ENCODE measurements at regions of chr21 and their contacts with region 1.

Region 1: GRCh38 chr21:46559291-46559983 is 45.4 kb downstream of the S100B start:
- DNase-seq: peak; percentile 46 to 84 (median 72)
- ATAC-seq: peak; percentile 66 to 75
- H3K4me3 Mint-ChIP-seq: peak overlapping the region; percentile 71 to 89 (median 81)
- H3K27ac Mint-ChIP-seq: peak overlapping the region; percentile 96 to 99 (median 99)
- H3K4me1 Mint-ChIP-seq: peaks cover 42 to 96% (median 84%) of the 10 kb centered on the region in 4 donors
- H3K27me3 Mint-ChIP-seq: no peaks in the 10 kb centered on the region

Region 2: GRCh38 chr21:46424039-46424591 is 135.3 kb before region 1 on chr21:
- POLR2A ChIA-PET with region 1: interaction called, 15 read pairs
- DNase-seq: peak in 8 of 10 donors; percentile 25 to 74 (median 50)
- ATAC-seq: peak; percentile 27 to 54
- H3K4me3 Mint-ChIP-seq: peak overlapping the region; percentile 72 to 92 (median 88)
- H3K27ac Mint-ChIP-seq: peak overlapping the region; percentile 94 to 100 (median 99)
- H3K4me1 Mint-ChIP-seq: peaks cover 13 to 46% (median 43%) of the 10 kb centered on the region in 4 donors
- H3K27me3 Mint-ChIP-seq: no peaks in the 10 kb centered on the region

Region 3: DNA sequence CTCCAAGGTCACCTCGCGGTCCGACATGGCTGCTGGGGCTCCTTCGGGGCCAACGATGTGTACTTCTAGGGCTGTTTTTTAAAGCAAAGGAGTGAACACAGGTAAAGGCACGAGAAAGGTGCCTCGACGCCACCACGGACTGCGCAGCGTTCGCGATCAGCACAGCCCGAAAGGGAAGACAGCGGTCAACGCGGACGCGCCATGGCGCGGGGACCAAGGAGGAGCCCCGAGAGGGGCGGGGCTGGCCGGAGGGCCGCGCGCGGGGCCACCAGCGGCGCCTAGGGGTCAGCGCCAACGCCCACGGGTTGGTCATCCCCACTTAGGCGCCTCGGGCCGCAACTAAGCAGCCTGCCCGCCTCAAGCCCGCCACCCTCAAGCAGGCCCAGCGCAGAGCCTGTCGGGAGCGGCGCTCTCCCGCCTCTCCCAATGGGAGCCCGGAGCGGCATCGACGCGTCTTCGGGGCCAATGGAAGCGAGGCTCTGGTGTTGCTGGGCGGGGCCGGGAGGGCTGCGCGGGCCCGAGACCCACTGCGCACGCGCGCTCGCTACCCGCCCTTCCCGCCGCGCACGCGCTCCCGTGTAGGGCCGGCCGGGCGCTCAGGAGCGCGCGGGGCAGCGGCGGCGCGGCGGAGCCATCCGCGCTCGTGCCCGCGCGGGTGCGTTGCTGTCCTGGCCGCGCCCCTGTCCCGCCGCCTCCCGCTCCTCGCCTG is 101.0 kb before region 1 on chr21 and contains the start of gene DIP2A:
- POLR2A ChIA-PET with region 1: interaction called, 10 read pairs
- DNase-seq: peak; percentile 85 to 98 (median 94)
- ATAC-seq: peak; percentile 96 to 97
- H3K4me3 Mint-ChIP-seq: peak within 1 kb of the TSS; percentile 89 to 97 (median 92)
- H3K27ac Mint-ChIP-seq: peak within 1 kb of the TSS; percentile 78 to 98 (median 96)
- H3K4me1 Mint-ChIP-seq: peaks cover 21 to 67% (median 58%) of the 10 kb centered on the region in 4 donors
- H3K27me3 Mint-ChIP-seq: no peaks in the 10 kb centered on the region
- polyA plus RNA-seq, gene DIP2A: 26.8 to 33.6 (median 28.6) TPM

Region 4: DNA sequence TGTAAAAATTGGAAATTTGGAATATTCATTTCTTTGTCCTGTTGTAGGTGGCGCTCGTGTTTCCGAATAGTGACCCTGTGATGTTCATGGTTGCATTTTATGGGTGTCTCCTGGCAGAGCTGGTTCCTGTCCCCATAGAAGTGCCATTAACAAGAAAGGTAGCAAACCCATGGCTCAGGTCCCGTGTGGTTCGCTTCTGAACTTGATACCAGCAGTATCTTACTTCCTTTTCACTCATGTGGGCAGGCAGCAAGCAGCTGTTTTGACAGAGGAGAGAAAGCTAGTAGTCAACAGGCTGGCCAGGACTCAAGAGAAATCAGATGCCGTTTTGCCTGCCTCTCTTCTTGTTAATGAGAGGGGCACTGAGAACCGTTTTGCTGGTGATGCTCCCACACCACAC is 27.4 kb before region 1 on chr21:
- POLR2A ChIA-PET with region 1: interaction called, 71 read pairs
- DNase-seq: peak in 9 of 10 donors; percentile 23 to 81 (median 64)
- ATAC-seq: peak; percentile 98
- H3K4me3 Mint-ChIP-seq: peak overlapping the region in 9 of 10 donors; percentile 53 to 83 (median 66)
- H3K27ac Mint-ChIP-seq: peak overlapping the region; percentile 82 to 96 (median 92)
- H3K4me1 Mint-ChIP-seq: peaks cover 22 to 81% (median 69%) of the 10 kb centered on the region in 4 donors
- H3K27me3 Mint-ChIP-seq: no peaks in the 10 kb centered on the region

Region 5: DNA sequence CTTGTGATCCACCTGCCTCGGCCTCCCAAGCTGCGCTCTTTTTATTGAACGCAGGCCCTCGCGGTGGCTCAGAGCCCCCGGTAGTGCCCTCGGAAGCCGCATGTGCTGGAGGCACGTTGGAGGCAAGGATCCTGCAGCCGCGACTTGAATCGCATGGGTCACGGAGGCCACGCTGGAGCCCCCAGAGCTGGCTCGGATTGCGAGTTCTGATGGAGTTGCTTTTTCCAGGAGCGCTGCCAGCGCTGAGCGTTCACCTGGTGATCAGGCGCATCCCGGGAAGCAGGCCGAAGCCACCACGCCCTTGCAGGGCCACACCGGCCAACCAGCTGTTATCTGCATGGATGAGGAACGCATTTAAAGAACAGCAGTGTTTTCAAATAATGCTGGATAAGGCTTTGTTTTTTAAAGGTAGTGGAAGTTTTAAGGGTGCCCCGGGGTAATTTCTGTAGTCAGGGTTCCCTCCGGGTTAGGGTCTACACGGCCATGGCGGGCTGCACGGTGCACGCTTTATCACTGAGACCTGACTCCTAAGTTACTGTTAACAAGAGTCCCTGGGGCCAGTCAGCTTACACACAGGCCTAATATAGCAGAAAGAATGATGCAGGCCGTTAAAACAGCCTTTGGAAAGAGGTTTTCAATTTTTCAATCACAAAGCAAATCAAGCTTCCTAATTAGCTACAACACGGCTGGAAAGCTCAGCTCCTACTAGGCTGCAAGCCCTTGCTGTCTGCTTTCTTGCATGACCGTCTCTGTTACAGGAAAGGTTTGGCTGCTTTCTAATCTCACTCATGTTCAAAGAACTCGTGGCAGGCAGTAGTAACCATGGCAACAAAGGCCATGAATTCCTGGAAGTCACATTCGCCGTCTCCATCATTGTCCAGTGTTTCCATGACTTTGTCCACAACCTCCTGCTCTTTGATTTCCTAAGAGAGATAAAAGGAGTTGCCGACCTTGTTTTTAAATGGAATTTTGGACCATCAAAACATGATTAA is 39.4 kb after region 1 on chr21:
- POLR2A ChIA-PET with region 1: interaction called, 46 read pairs
- DNase-seq: peak in 1 of 10 donors; percentile 33
- ATAC-seq: peak; percentile 61 to 62
- H3K4me3 Mint-ChIP-seq: peak overlapping the region in 6 of 10 donors; percentile 1 to 42 (median 36)
- H3K27ac Mint-ChIP-seq: peak overlapping the region; percentile 12 to 92 (median 75)
- H3K4me1 Mint-ChIP-seq: peaks cover 19 to 47% (median 33%) of the 10 kb centered on the region in 4 donors
- H3K27me3 Mint-ChIP-seq: no peaks in the 10 kb centered on the region

Region 6: DNA sequence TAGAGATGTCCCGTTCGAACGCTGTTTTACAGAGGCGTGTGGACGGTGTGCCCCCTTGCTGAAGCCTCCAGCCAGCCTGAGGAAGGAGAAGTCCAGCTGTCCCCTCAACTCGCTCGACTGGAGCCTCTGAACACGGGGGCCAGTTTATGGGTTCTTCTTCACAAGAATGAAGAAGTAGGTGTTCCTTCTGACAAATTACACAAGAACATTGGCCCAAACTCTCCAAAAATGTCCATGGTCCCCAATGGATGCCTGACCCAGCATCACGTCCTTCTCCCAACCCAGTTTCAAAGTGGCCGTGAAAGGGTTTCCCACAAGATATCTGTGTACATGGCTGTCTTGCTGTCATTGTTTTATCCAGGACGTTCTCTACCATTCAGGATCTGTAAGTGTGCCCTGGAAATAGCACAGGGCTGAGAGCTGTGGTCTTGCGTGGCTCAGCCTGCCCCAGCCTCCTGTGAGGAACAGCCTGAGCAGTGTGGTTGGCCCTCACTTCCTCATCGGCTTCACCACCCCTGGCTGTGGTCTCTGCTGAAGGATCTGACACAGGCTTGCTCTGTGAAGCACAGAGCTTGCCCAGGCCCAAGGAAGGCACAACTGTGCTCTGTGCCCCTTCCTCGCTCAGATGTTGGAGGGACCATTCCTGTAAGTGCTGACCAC is 46.5 kb after region 1 on chr21:
- POLR2A ChIA-PET with region 1: interaction called, 43 read pairs
- DNase-seq: peak in 9 of 10 donors; percentile 37 to 80 (median 51)
- ATAC-seq: peak; percentile 88 to 91
- H3K4me3 Mint-ChIP-seq: peak overlapping the region; percentile 16 to 92 (median 85)
- H3K27ac Mint-ChIP-seq: peak overlapping the region; percentile 82 to 95 (median 93)
- H3K4me1 Mint-ChIP-seq: peaks cover 35 to 79% (median 57%) of the 10 kb centered on the region in 4 donors
- H3K27me3 Mint-ChIP-seq: no peaks in the 10 kb centered on the region

Region 7: GRCh38 chr21:46622226-46622625 is 62.8 kb after region 1 on chr21:
- POLR2A ChIA-PET with region 1: interaction called, 55 read pairs
- DNase-seq: peak; percentile 17 to 88 (median 74)
- ATAC-seq: peak; percentile 73 to 79
- H3K4me3 Mint-ChIP-seq: peak overlapping the region; percentile 53 to 74 (median 66)
- H3K27ac Mint-ChIP-seq: peak overlapping the region; percentile 90 to 100 (median 98)
- H3K4me1 Mint-ChIP-seq: peaks cover 34 to 77% (median 64%) of the 10 kb centered on the region in 4 donors
- H3K27me3 Mint-ChIP-seq: no peaks in the 10 kb centered on the region

Measured in naive thymus-derived CD8-positive, alpha-beta T cell (primary cell).